Dendritic cell treated with granulocyte-macrophage colony-stimulating factor and Interleukin-4, amounts not matched to agents 40 ng/mL and 50 ng/mL, for 4 days (primary cell): ENCODE measurements at regions of chr15 and their contacts with region 1.

Region 1: GRCh38 chr15:52765785-52766184 is 24.4 kb downstream of the ONECUT1 start:
- H3K4me3 Mint-ChIP-seq: no peak overlapping the region
- H3K27ac Mint-ChIP-seq: no peak overlapping the region
- H3K4me1 Mint-ChIP-seq: peaks cover 11% of the 10 kb centered on the region
- H3K27me3 Mint-ChIP-seq: peaks cover 45% of the 10 kb centered on the region

Region 2: DNA sequence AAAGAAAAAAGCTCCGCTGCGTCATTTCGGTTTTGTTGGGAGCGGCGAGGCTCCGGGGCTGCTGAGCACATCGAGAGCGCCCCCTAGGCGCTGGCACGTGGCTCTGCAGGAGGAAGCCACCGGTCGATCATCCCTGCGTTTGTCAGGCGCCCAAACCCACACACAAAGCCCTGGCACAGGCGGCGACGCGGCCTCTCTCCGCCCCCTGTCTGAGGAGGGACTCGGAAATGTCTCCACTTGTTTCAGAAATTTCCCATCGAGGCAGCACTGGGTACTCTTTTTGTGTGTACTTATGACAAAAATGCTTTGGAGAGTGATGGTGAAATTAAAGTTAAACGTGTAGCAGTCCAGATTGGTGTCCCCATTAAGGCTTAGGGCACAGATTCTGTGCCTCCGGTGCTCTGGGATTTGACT is 431.6 kb after region 1 on chr15:
- intact Hi-C with region 1: loop called (anchors 5 kb)
- H3K4me3 Mint-ChIP-seq: no peak overlapping the region
- H3K27ac Mint-ChIP-seq: no peak overlapping the region
- H3K4me1 Mint-ChIP-seq: peaks cover 8% of the 10 kb centered on the region
- H3K27me3 Mint-ChIP-seq: peaks cover 17% of the 10 kb centered on the region

Region 3: DNA sequence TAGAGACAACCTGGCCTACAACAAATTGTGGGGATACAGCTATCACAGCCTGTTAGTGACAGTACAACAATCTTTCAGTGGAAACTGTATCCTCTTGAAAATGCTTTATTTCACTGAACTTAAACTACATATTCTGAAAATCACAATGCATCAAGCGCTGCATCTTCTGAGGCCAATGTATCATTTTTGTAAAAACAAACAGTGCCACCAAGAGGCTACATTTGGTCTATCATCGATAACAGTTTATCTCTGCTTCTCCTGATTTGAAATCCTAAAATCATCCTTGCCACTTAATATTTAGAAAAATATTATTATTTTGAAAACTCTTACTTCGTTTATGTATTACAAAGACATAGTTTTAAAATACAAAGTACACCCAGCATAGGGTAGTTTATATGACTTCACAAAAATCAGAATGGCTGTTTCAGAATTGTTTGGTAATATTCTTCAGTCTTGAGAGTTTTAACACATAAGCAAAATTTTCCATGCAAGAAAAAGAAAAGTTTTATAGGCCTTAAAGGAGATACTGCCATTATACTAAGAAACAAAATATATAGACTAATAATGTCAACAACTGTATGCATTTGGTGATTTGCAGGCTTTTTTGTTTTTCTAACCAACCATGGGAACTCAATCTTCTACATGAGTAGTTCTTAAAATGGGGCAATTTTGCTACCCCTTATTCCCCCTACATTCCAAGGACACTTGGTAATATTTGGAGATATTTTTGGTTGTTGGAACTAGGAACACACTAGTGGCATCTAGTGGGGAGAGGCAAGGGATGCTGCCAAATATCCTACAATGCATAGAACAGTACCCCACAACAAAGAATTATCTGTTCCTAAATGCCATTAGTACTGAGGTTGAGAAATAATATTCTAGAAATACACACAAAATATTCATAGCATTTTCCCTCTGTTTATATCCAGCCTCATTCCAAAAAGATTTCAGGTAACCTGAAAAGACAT is 951.4 kb after region 1 on chr15:
- intact Hi-C with region 1: loop called (anchors 10 kb)
- H3K4me3 Mint-ChIP-seq: no peak overlapping the region
- H3K27ac Mint-ChIP-seq: no peak overlapping the region
- H3K4me1 Mint-ChIP-seq: no peaks in the 10 kb centered on the region
- H3K27me3 Mint-ChIP-seq: no peaks in the 10 kb centered on the region